ENCODE measurements at regions of chr19 and their contacts with region 1.

Region 1: DNA sequence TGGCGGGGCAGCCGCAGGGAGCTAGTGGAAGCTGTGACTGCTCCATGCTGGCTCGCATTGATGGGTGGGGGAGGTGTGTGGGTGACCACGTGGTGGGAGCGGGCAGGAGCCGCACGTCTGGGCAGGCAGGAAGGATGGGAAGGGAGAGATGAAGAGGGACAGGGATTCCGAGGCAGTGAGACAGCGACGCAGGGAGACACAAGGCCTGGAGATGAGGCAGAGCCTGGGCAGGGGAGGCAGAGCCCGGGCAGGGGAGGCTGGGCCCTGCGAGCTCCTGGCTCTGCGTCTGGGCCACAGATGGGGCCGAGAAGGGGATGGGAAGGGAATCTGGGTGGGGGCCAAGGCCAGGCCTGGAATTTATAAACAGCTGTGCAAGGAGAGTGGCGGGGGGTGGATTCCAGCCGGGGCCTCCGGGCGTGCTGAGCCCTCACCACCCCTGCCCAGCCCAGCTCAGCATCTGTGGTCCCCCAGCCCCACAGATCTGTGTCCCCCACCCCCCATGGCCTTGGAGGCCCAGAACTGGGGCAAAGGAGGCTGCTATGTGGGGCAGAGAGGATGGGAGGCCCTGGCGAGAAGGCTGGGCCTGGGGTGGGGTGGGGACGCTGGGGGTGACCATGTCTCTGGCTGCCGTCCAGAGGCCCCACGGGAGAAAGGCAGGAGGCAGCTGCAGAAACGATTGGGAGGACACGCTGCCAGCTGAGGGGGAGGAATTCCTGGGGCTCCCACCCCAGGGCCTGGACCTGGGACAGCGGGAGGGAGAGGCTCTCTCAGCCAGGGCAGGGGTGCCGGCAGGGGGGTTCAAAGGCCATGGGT is 6.0 kb downstream of the EHD2 start:
- DNase-seq: peak; percentile 96

Region 2: DNA sequence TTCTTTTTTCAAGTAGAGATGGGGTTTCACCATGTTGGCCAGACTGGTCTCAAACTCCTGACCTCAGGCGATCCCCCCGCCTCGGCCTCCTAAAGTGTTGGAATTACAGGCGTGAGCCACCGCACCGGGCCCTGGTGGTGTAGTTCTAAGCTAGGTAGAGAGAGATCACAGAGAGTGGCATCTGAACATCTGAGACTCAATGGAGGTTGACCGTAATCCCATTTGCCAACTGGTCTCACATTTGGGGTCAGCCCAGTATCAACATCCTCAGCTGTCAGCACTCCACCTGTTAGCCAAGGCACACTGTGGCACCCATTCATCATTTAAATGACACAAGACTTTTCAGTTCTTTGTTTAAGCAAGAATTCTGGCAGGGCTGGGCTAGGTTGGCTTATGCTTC is 67.3 kb after region 1 on chr19:
- intact Hi-C with region 1: loop called in 1 of 2 experiments (anchors 5 kb)
- DNase-seq: no peak

Region 3: GRCh38 chr19:47891923-47892666 is 172.8 kb after region 1 on chr19:
- intact Hi-C with region 1: no loop called
- DNase-seq: peak; percentile 24